ENCODE measurements at regions of chr17 and their contacts with region 1.

Region 1: GRCh38 chr17:48892940-48893645 is 506 bp downstream of the ATP5MC1 start:
- DNase-seq: no peak
- H3K4me3 ChIP-seq: peak overlapping the region; percentile 54 to 96 (median 82)
- H3K27ac ChIP-seq: peak overlapping the region; percentile 58 to 84
- H3K4me1 ChIP-seq: peaks cover 11 to 20% (median 16%) of the 10 kb centered on the region in 4 experiments
- H3K27me3 ChIP-seq: no peaks in the 10 kb centered on the region

Region 2: GRCh38 chr17:48908047-48908843 is 15.2 kb after region 1 on chr17 and contains the start of gene UBE2Z:
- CTCF ChIA-PET with region 1: interaction called, 4 read pairs
- POLR2A ChIA-PET with region 1: interaction called, 17 read pairs
- DNase-seq: peak; percentile 97 to 98 (median 97)
- H3K4me3 ChIP-seq: peak within 1 kb of the TSS; percentile 70 to 87 (median 80)
- H3K27ac ChIP-seq: peak within 1 kb of the TSS; percentile 99
- H3K4me1 ChIP-seq: peaks cover 2 to 34% (median 30%) of the 10 kb centered on the region in 4 experiments
- H3K27me3 ChIP-seq: no peaks in the 10 kb centered on the region

Measured in common myeloid progenitor, CD34-positive (primary cell).